ENCODE measurements at regions of chr2 and their contacts with region 1.

Region 1: GRCh38 chr2:200864176-200864976 is at the start of gene CLK1:
- DNase-seq: peak; percentile 93 to 98
- ATAC-seq: peak; percentile 76 to 92 (median 82)
- H3K4me3 ChIP-seq: peak within 1 kb of the TSS; percentile 95
- H3K4me3 Mint-ChIP-seq: peak within 1 kb of the TSS; percentile 93
- H3K27ac ChIP-seq: peak within 1 kb of the TSS; percentile 99
- H3K27ac Mint-ChIP-seq: peak within 1 kb of the TSS; percentile 92 to 99
- H3K4me1 ChIP-seq: peaks cover 23% of the 10 kb centered on the region
- H3K4me1 Mint-ChIP-seq: peaks cover 45 to 58% of the 10 kb centered on the region in 2 donors
- H3K27me3 ChIP-seq: no peaks in the 10 kb centered on the region
- H3K27me3 Mint-ChIP-seq: no peaks in the 10 kb centered on the region
- CTCF ChIP-seq: no peak
- total RNA-seq, gene CLK1: 975 to 1,296 (median 1,070) TPM

Region 2: GRCh38 chr2:200525882-200526651 is 338.3 kb before region 1 on chr2 and contains the start of gene SGO2:
- intact Hi-C with region 1: loop called (anchors 5 kb)
- DNase-seq: peak; percentile 92 to 97
- ATAC-seq: peak; percentile 99 to 100 (median 99)
- H3K4me3 ChIP-seq: peak within 1 kb of the TSS; percentile 94
- H3K4me3 Mint-ChIP-seq: peak within 1 kb of the TSS; percentile 92
- H3K27ac ChIP-seq: peak within 1 kb of the TSS; percentile 70
- H3K27ac Mint-ChIP-seq: peak within 1 kb of the TSS; percentile 85
- H3K4me1 ChIP-seq: peaks cover 7% of the 10 kb centered on the region
- H3K4me1 Mint-ChIP-seq: peaks cover 9 to 10% of the 10 kb centered on the region in 2 donors
- H3K27me3 ChIP-seq: no peaks in the 10 kb centered on the region
- H3K27me3 Mint-ChIP-seq: peaks cover 2 to 7% of the 10 kb centered on the region in 2 donors
- CTCF ChIP-seq: no peak
- total RNA-seq, gene SGO2: 2.3 to 5.4 (median 3.1) TPM

Region 3: GRCh38 chr2:200689115-200689514 is 175.3 kb before region 1 on chr2:
- intact Hi-C with region 1: no loop called
- DNase-seq: no peak
- ATAC-seq: no peak
- H3K4me3 ChIP-seq: no peak overlapping the region
- H3K4me3 Mint-ChIP-seq: no peak overlapping the region
- H3K27ac ChIP-seq: no peak overlapping the region
- H3K27ac Mint-ChIP-seq: no peak overlapping the region
- H3K4me1 ChIP-seq: no peaks in the 10 kb centered on the region
- H3K4me1 Mint-ChIP-seq: peaks cover 0 to 5% of the 10 kb centered on the region in 2 donors
- H3K27me3 ChIP-seq: no peaks in the 10 kb centered on the region
- H3K27me3 Mint-ChIP-seq: peaks cover 0 to 4% of the 10 kb centered on the region in 2 donors
- CTCF ChIP-seq: no peak

Region 4: DNA sequence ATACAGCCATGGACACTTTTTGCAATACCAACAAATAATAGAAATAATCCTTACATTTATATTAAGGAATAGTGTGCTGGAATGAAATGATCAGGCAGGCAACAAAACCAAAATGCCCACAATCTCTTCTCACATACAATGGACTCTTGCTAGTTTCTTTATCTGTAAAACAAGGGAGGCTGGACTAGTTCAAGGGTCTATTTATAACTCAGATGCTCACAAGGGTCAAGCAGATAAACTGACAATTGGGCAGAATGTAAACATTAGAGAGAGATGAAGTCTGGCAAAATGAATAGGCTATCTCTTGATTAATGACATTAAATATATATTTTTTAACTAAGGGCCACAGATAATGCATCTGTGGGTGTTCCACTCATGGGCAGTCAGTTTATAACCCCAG is 13.1 kb after region 1 on chr2:
- intact Hi-C with region 1: no loop called
- DNase-seq: no peak
- ATAC-seq: no peak
- H3K4me3 ChIP-seq: no peak overlapping the region
- H3K4me3 Mint-ChIP-seq: no peak overlapping the region
- H3K27ac ChIP-seq: no peak overlapping the region
- H3K27ac Mint-ChIP-seq: no peak overlapping the region
- H3K4me1 ChIP-seq: no peaks in the 10 kb centered on the region
- H3K4me1 Mint-ChIP-seq: no peaks in the 10 kb centered on the region
- H3K27me3 ChIP-seq: no peaks in the 10 kb centered on the region
- H3K27me3 Mint-ChIP-seq: no peaks in the 10 kb centered on the region
- CTCF ChIP-seq: no peak

Region 5: GRCh38 chr2:201118121-201118960 is 254.0 kb after region 1 on chr2:
- intact Hi-C with region 1: loop called (anchors 2 kb)
- DNase-seq: peak; percentile 87 to 93
- ATAC-seq: peak; percentile 46 to 61 (median 54)
- H3K4me3 ChIP-seq: peak overlapping the region; percentile 90
- H3K4me3 Mint-ChIP-seq: peak overlapping the region; percentile 95
- H3K27ac ChIP-seq: peak overlapping the region; percentile 93
- H3K27ac Mint-ChIP-seq: peak overlapping the region; percentile 93 to 100
- H3K4me1 ChIP-seq: peaks cover 50% of the 10 kb centered on the region
- H3K4me1 Mint-ChIP-seq: peaks cover 79 to 82% of the 10 kb centered on the region in 2 donors
- H3K27me3 ChIP-seq: no peaks in the 10 kb centered on the region
- H3K27me3 Mint-ChIP-seq: no peaks in the 10 kb centered on the region
- CTCF ChIP-seq: peak; percentile 40

Measured in natural killer cell (primary cell).